Colonic mucosa (tissue), 4 donors: ENCODE measurements at regions of chr9 and their contacts with region 1.

Region 1: DNA sequence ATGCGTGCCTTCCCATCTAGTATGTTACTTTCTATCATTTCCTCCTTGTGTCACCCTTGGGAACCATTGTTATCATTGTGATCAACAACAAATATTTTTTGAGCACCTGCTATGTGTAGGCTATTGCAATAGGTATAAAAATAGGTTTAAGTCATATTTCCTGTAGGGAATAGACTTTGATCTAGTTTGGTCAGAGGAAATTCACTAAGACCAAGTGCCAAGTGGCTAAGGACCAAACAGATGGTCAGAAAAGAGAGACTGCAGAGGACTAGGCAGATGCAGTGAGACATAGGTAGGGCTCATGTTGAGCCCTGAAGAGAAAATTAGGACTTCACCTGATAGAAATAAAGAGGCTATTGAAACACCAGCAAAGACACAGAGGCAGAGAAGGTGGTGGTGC is 430.0 kb upstream of the ADAMTSL1 start:
- DNase-seq: no peak
- H3K4me3 ChIP-seq: no peak overlapping the region
- H3K27ac ChIP-seq: no peak overlapping the region
- H3K4me1 ChIP-seq: no peaks in the 10 kb centered on the region
- H3K27me3 ChIP-seq: no peaks in the 10 kb centered on the region
- CTCF ChIP-seq: no peak

Region 2: GRCh38 chr9:17994700-17995430 is 49.1 kb before region 1 on chr9:
- intact Hi-C with region 1: loop called (anchors 5 kb)
- DNase-seq: no peak
- H3K4me3 ChIP-seq: no peak overlapping the region
- H3K27ac ChIP-seq: no peak overlapping the region
- H3K4me1 ChIP-seq: no peaks in the 10 kb centered on the region
- H3K27me3 ChIP-seq: no peaks in the 10 kb centered on the region
- CTCF ChIP-seq: no peak

Region 3: DNA sequence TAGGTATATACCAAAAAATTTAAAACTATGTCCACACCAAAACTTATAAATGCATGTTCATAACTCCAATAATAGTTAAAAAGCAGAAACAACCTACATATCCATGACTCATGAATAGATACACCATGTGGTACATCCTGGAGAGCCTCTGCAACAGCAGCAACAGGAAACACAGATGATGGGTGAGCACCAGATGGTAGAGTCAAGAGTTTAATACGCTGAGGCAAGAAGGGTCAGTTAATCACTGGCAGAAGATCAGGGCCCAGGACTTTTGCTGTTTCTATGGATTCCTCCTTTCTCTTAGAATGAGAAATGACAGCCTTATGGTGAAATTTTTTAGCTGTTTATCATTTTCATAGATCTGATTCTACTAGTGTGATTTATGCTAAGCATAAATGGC is 78.2 kb after region 1 on chr9:
- intact Hi-C with region 1: no loop called
- DNase-seq: no peak
- H3K4me3 ChIP-seq: no peak overlapping the region
- H3K27ac ChIP-seq: no peak overlapping the region
- H3K4me1 ChIP-seq: no peaks in the 10 kb centered on the region
- H3K27me3 ChIP-seq: no peaks in the 10 kb centered on the region
- CTCF ChIP-seq: no peak

Region 4: DNA sequence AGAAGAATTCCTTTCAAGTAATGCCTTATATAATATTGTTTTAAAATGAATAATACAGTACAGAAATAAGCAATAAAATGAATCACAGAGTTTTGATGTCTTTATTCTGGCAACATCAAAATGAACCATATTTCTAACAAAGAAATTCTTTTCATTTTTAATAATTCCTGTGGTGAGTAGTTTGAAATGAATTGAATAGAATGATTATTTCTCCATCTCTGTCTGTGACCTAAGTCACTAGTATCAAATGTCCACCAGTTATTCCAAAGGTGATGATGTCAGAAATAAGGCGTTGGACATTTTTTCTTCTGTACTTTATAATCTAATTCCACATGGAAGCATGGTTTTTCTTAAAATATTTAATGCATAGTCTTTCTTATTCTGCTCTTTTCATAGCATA is 536.2 kb after region 1 on chr9:
- intact Hi-C with region 1: no loop called
- DNase-seq: no peak
- H3K4me3 ChIP-seq: no peak overlapping the region
- H3K27ac ChIP-seq: no peak overlapping the region
- H3K4me1 ChIP-seq: no peaks in the 10 kb centered on the region
- H3K27me3 ChIP-seq: no peaks in the 10 kb centered on the region
- CTCF ChIP-seq: no peak